ENCODE measurements at regions of chr16 and their contacts with region 1.

Region 1: GRCh38 chr16:66740010-66740409 is 11.4 kb downstream of the DYNC1LI2 start:
- DNase-seq: no peak
- ATAC-seq: peak; percentile 71
- H3K4me3 ChIP-seq: no peak overlapping the region
- H3K27ac ChIP-seq: peak overlapping the region; percentile 34; the same call in 1 of the 2 replicates
- H3K4me1 ChIP-seq: peaks cover 32 to 43% of the 10 kb centered on the region in 2 experiments
- H3K27me3 ChIP-seq: no peaks in the 10 kb centered on the region
- CTCF ChIP-seq: peak; percentile 47 to 84 (median 73); a peak in 5 of 6 replicates
- POLR2A ChIP-seq: no peak
- RAD21 ChIP-seq: peak; percentile 21; the same call in 1 of the 2 replicates

Region 2: GRCh38 chr16:66473791-66474519 is 266.1 kb before region 1 on chr16:
- CTCF ChIA-PET with region 1: no interaction called
- POLR2A ChIA-PET with region 1: no interaction called
- RAD21 ChIA-PET with region 1: no interaction called
- intact Hi-C with region 1: no loop called
- DNase-seq: no peak
- ATAC-seq: no peak
- H3K4me3 ChIP-seq: no peak overlapping the region
- H3K27ac ChIP-seq: no peak overlapping the region
- H3K4me1 ChIP-seq: peaks cover 21 to 22% of the 10 kb centered on the region in 2 experiments
- H3K27me3 ChIP-seq: no peaks in the 10 kb centered on the region
- CTCF ChIP-seq: 0 out of 6 replicates have a peak, but pooled peaks of 2 of the 3 experiments have one; percentile 5 to 8
- POLR2A ChIP-seq: no peak
- RAD21 ChIP-seq: no peak

Region 3: GRCh38 chr16:66660422-66661209 is 79.4 kb before region 1 on chr16:
- CTCF ChIA-PET with region 1: interaction called, 14 read pairs
- POLR2A ChIA-PET with region 1: no interaction called
- RAD21 ChIA-PET with region 1: no interaction called
- intact Hi-C with region 1: no loop called
- DNase-seq: no peak
- ATAC-seq: no peak
- H3K4me3 ChIP-seq: no peak overlapping the region
- H3K27ac ChIP-seq: no peak overlapping the region
- H3K4me1 ChIP-seq: peaks cover 3 to 10% of the 10 kb centered on the region in 2 experiments; a peak in 2 of 4 replicates
- H3K27me3 ChIP-seq: no peaks in the 10 kb centered on the region
- CTCF ChIP-seq: no peak
- POLR2A ChIP-seq: no peak
- RAD21 ChIP-seq: no peak

Region 4: GRCh38 chr16:66728117-66728787 is 11.8 kb before region 1 on chr16:
- CTCF ChIA-PET with region 1: interaction called, 16 read pairs
- POLR2A ChIA-PET with region 1: no interaction called
- RAD21 ChIA-PET with region 1: interaction called in 1 of 2 experiments, 5 read pairs
- intact Hi-C with region 1: no loop called
- DNase-seq: peak; percentile 28
- ATAC-seq: peak; percentile 90
- H3K4me3 ChIP-seq: no peak overlapping the region
- H3K27ac ChIP-seq: no peak overlapping the region
- H3K4me1 ChIP-seq: no peaks in the 10 kb centered on the region
- H3K27me3 ChIP-seq: no peaks in the 10 kb centered on the region
- CTCF ChIP-seq: peak; percentile 54 to 79 (median 75)
- POLR2A ChIP-seq: no peak
- RAD21 ChIP-seq: peak; percentile 64

Region 5: DNA sequence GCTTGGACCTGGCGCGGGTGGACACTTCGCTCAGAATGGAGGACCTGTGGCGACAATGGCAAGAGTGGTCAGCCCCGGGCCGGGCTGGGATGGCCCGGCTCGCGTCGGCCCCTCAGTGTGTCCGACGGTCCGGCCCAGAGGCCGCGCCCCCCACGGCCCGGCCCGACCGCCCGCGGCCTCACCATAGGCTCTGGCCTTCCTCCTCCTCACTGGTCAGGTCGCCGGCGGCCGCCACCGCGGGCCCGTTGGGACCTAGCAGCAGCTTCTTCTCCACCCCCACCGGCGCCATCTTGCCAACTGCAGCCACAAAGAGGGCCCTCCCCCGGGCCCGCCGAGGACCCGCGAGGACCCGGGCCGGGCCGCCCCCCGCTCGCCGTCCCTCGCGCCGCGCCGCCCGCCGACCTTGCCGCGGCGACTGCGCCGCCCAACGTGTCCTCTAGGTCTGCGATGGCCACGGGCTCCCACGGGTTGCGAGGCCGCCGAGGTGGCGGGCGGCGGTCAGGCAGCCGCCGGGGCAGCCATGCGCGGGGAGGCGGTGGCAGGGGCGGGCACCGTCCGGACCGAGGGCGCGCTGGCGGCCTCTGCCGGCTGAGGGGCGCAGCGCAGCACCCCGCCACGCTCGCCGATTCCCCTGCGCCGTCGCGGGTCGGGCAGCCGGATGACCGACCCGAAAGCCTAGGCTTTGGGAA is 11.4 kb after region 1 on chr16 and contains the start of gene DYNC1LI2:
- CTCF ChIA-PET with region 1: interaction called, 22 read pairs
- POLR2A ChIA-PET with region 1: no interaction called
- RAD21 ChIA-PET with region 1: no interaction called
- intact Hi-C with region 1: no loop called
- DNase-seq: peak; percentile 34
- ATAC-seq: peak; percentile 93
- H3K4me3 ChIP-seq: peak within 1 kb of the TSS; percentile 89 to 90
- H3K27ac ChIP-seq: peak within 1 kb of the TSS; percentile 96
- H3K4me1 ChIP-seq: peaks cover 12 to 19% of the 10 kb centered on the region in 2 experiments
- H3K27me3 ChIP-seq: no peaks in the 10 kb centered on the region
- CTCF ChIP-seq: peak; percentile 36 to 73 (median 66); a peak in 5 of 6 replicates
- POLR2A ChIP-seq: peak; percentile 17
- RAD21 ChIP-seq: peak; percentile 36
- total RNA-seq, gene DYNC1LI2: 92.8 TPM

Region 6: DNA sequence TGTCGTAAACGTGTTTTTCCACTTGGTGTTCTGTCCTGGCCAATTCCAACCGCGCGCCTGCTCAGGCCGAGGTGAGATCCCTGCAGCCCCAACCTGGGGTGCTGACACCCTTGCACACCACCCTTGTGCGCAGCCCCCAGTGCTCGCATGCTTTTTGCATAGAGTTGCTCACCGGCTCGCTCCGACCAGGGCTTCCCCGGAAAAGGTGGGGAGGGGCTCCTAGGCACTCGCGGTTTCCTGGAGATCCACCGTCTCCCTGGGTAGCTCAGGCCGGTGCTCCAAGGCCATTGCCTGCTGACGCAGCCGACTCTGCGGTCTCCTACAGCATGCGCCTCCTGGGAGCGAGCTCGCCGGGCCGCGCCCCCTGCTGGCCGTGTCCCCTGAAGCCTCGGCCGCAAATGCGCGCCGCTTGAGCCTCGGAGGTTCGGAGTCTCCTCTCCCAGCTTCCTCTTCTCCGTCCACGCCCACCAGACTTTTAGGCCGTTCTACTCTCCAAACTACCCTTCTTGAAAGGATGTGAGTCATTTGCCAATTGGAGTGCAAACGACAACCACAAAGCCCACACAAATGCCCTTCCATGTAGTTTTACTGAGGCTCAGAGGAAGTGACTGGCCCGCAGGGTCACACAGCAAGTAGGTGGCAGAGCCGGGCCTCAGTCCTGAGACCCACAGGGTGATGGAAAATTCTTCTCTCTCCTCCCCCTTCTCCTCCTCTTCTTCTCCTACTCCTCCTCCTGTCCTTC is 133.1 kb after region 1 on chr16:
- CTCF ChIA-PET with region 1: interaction called, 19 read pairs
- POLR2A ChIA-PET with region 1: no interaction called
- RAD21 ChIA-PET with region 1: interaction called in 1 of 2 experiments, 4 read pairs
- intact Hi-C with region 1: loop called (anchors 5 kb)
- DNase-seq: peak; percentile 89
- ATAC-seq: peak; percentile 95
- H3K4me3 ChIP-seq: peak overlapping the region; percentile 42 to 57
- H3K27ac ChIP-seq: peak overlapping the region; percentile 65
- H3K4me1 ChIP-seq: peaks cover 12 to 27% of the 10 kb centered on the region in 2 experiments
- H3K27me3 ChIP-seq: no peaks in the 10 kb centered on the region
- CTCF ChIP-seq: peak; percentile 74 to 95 (median 91)
- POLR2A ChIP-seq: no peak
- RAD21 ChIP-seq: no peak

Measured in HCT116 (cell line).